A549 (cell line): ENCODE measurements at regions of chr9 and their contacts with region 1.

Region 1: GRCh38 chr9:75013735-75014134 is 14.4 kb downstream of the CARNMT1 start:
- DNase-seq: no peak
- ATAC-seq: no peak
- H3K4me3 ChIP-seq: no peak overlapping the region
- H3K27ac ChIP-seq: no peak overlapping the region
- H3K4me1 ChIP-seq: no peaks in the 10 kb centered on the region
- CTCF ChIP-seq: no peak
- EP300 ChIP-seq: no peak
- POLR2A ChIP-seq: no peak
- RAD21 ChIP-seq: no peak

Region 2: GRCh38 chr9:75001719-75002422 is 11.9 kb before region 1 on chr9:
- CTCF ChIA-PET with region 1: interaction called, 17 read pairs
- POLR2A ChIA-PET with region 1: no interaction called
- DNase-seq: peak; percentile 21 to 86
- ATAC-seq: peak; percentile 97 to 98
- H3K4me3 ChIP-seq: no peak overlapping the region
- H3K27ac ChIP-seq: no peak overlapping the region
- H3K4me1 ChIP-seq: no peaks in the 10 kb centered on the region
- CTCF ChIP-seq: peak; percentile 94
- EP300 ChIP-seq: no peak
- POLR2A ChIP-seq: no peak
- RAD21 ChIP-seq: peak; percentile 80 to 88